Mucosa of descending colon (tissue), 3 donors: ENCODE measurements at regions of chr12 and their contacts with region 1.

Region 1: GRCh38 chr12:92145731-92146496 is at the start of gene BTG1:
- DNase-seq: peak; percentile 99
- ATAC-seq: peak; percentile 87
- H3K4me3 ChIP-seq: peak within 1 kb of the TSS; percentile 95
- H3K4me1 ChIP-seq: no peaks in the 10 kb centered on the region
- CTCF ChIP-seq: no peak
- total RNA-seq, gene BTG1: 124 to 176 (median 147) TPM

Region 2: DNA sequence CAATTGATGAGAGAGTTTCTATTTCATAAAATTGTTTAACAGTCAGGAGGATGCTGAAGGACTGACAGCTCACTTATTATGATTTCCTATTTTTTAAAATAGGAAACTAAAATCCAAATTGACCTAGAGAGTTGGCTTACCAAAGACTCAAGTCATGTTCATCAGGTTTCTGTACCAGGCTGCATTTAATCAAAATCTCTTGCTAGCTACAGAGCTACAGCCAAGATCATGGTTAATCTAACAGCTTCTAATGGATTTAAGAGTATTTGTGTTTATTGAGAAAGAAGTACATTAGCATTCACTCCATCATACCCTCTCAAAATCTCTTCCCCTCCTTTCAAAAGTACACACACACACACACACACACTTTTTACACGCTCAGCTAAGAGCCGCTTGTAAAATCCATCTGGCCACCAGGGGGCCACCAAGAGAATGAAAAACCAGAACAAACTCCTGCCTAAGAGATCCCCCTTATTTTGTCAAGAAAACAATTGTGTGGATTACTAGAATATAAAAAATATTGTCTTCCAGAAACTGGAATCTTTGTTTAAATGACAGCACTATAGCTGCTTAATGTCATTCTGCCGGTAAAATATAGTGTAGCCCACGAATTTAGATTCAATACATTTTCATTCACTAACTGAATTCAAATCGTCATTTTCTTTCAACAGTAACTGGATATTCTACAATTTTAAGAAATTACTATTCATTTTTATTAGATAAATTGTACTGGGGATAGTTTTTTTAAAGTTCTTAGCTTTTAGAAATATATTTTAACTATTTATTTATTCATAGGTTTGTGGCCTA is 334.2 kb before region 1 on chr12:
- intact Hi-C with region 1: loop called in 1 of 2 experiments (anchors 10 kb)
- DNase-seq: peak; percentile 61 to 93 (median 81)
- ATAC-seq: peak; percentile 72
- H3K4me3 ChIP-seq: no peak overlapping the region
- H3K4me1 ChIP-seq: no peaks in the 10 kb centered on the region
- CTCF ChIP-seq: peak; percentile 52

Region 3: GRCh38 chr12:92028441-92028709 is 117.5 kb before region 1 on chr12:
- intact Hi-C with region 1: loop called in 1 of 2 experiments (anchors 5 kb)
- DNase-seq: no peak
- ATAC-seq: no peak
- H3K4me3 ChIP-seq: no peak overlapping the region
- H3K4me1 ChIP-seq: no peaks in the 10 kb centered on the region
- CTCF ChIP-seq: no peak

Region 4: DNA sequence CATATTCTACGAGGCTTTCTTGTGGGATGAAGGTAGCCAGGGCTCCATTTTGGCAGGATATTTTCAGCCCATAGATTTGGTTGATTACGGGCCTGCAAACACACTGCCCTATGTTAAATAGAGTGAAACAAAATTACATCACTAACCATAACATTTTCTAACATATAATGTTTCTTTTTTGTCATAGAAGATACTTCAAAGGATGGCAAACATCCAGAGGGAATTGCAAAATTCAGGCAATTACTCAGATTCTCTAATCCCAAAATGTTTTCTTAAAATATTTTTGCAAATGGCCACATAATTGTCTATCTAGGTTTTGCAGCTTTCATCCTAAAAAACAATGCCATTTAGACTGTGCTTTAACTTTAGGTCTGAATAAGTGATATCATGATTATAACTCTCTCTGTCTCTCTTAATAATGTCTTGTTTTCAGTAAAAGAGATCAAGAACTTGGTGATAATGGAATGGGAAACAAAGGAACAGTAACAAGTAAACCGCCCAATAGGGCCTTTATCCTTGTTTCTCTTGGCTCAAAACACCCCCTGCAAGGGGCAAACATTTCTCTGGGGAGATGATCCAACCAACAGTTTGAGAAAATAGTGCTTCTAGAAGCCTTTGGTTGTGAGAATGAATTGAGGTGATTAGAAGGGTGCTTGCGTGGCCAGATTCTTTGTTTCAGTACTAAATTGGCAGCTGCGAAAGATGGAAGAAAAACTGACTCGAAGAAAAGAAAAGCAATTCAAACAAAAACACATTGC is 54.1 kb after region 1 on chr12:
- intact Hi-C with region 1: no loop called
- DNase-seq: no peak
- ATAC-seq: no peak
- H3K4me3 ChIP-seq: no peak overlapping the region
- H3K4me1 ChIP-seq: no peaks in the 10 kb centered on the region
- CTCF ChIP-seq: no peak

Region 5: GRCh38 chr12:92270521-92270920 is 124.6 kb after region 1 on chr12:
- intact Hi-C with region 1: no loop called
- DNase-seq: no peak
- ATAC-seq: no peak
- H3K4me3 ChIP-seq: no peak overlapping the region
- H3K4me1 ChIP-seq: no peaks in the 10 kb centered on the region
- CTCF ChIP-seq: no peak

Region 6: DNA sequence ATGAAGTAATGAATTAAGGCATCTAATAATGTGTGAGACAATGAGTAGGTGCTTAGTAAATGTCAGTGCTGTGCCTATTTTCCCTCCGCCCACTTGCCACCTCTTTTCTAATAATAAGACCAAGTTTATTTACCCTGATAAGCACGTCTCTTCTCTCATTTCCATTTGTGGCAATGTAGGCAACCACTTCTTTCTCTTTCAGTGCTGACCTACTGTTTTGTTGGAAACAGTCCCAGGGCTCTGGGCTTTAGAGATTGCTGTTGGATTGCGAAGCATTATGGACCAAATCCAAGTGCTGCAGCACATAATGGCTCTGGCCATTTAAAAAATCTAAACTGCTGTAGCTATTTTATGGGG is 415.6 kb after region 1 on chr12:
- intact Hi-C with region 1: loop called in 1 of 2 experiments (anchors 10 kb)
- DNase-seq: peak in 1 of 3 donors; percentile 66
- ATAC-seq: peak; percentile 40
- H3K4me3 ChIP-seq: no peak overlapping the region
- H3K4me1 ChIP-seq: peaks cover 4% of the 10 kb centered on the region
- CTCF ChIP-seq: no peak

Region 7: GRCh38 chr12:92570056-92570753 is 424.3 kb after region 1 on chr12:
- intact Hi-C with region 1: loop called (anchors 10 kb)
- DNase-seq: peak in 1 of 3 donors; percentile 94
- ATAC-seq: peak; percentile 82
- H3K4me3 ChIP-seq: no peak overlapping the region
- H3K4me1 ChIP-seq: no peaks in the 10 kb centered on the region
- CTCF ChIP-seq: peak; percentile 24

Region 8: DNA sequence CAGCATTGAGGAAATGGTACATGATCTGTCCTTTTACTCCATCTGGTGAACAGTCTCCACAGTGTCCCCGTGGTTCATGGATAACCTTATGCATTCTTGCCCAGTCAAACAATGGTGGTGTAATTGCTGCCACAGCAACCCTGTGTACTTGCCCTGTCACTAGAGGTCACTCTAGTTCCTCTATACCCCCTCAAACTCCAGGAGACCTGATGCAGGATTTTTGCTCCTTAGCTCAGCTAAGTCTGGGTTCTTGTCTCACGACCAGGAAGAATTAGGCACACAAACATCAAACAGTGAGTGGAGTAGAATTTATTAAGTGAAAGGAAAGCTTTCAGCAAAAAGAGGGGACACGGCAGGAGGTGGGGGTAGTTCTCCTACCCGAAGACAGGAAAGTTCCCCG is 807.8 kb after region 1 on chr12:
- intact Hi-C with region 1: no loop called
- DNase-seq: no peak
- ATAC-seq: no peak
- H3K4me3 ChIP-seq: no peak overlapping the region
- H3K4me1 ChIP-seq: no peaks in the 10 kb centered on the region
- CTCF ChIP-seq: no peak